Activated CD4-positive, alpha-beta memory T cell treated with anti-CD3 and anti-CD28 coated beads, Interleukin-2, amount 10 ng/mL, durations not matched to agents 7 days and 5 days (primary cell): ENCODE measurements at regions of chr2 and their contacts with region 1.

Region 1: GRCh38 chr2:225041851-225042799 is at the start of gene DOCK10:
- DNase-seq: peak; percentile 55
- H3K4me3 Mint-ChIP-seq: peak within 1 kb of the TSS; percentile 99
- H3K27ac Mint-ChIP-seq: peak within 1 kb of the TSS; percentile 98
- H3K4me1 Mint-ChIP-seq: peaks cover 49% of the 10 kb centered on the region
- H3K27me3 Mint-ChIP-seq: peaks cover 33% of the 10 kb centered on the region
- total RNA-seq, gene DOCK10: 223 to 239 TPM

Region 2: DNA sequence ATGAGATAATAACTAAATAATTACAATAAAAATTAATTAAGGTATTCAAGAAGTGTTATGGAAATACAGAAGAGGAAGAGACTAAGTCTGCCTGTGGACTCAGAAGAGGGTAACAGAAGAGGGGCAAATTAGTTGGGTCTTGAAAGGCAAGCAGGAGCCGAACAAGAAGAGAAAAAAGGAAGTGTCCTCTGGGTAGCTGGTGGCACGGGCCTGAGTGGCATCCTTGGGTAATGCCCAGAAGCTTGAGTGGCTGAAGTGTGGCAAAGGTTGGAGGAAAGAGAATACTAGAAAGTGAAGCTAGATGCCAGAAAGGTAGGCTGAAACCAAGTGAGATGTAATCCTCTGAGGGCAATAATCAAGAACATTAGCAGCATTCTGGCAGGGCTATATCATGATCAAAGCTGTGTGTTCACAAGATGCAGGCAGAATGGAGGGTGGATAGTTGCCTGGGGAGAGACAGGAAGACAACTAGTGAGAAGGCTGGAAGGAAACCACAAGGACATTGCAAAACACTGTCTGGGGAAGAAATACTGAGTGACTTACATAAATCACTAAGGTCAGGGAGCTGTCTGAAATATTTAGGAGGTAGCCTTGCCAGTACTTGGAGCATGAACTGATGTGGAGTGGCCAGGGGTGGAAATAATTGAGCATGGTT is 16.1 kb before region 1 on chr2:
- CTCF ChIA-PET with region 1: interaction called, 3 read pairs
- POLR2A ChIA-PET with region 1: interaction called, 10 read pairs
- DNase-seq: no peak
- H3K4me3 Mint-ChIP-seq: no peak overlapping the region
- H3K27ac Mint-ChIP-seq: peak overlapping the region; percentile 1
- H3K4me1 Mint-ChIP-seq: peaks cover 56% of the 10 kb centered on the region
- H3K27me3 Mint-ChIP-seq: no peaks in the 10 kb centered on the region

Region 3: DNA sequence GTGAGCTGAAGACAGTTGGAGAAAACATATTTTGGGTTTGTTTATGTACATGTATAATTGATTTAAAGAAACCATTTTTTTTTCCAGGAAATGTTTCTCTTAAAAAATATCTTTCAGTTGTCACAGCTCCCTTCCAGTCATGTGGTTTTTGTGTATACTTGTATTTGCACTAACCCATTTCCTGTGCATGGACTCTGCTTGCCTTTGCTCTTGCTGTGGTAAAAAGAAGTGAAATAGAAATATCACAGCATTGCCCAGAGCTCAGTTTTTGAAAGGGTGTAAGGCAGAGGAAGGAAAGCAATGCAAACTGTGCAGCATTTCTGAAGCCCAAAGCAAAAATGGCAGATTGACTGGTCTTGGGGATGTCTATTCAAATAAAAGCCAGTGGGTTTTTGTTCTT is 10.6 kb after region 1 on chr2:
- CTCF ChIA-PET with region 1: interaction called, 23 read pairs
- POLR2A ChIA-PET with region 1: interaction called, 113 read pairs
- DNase-seq: peak; percentile 50
- H3K4me3 Mint-ChIP-seq: peak overlapping the region; percentile 15
- H3K27ac Mint-ChIP-seq: peak overlapping the region; percentile 84
- H3K4me1 Mint-ChIP-seq: peaks cover 65% of the 10 kb centered on the region
- H3K27me3 Mint-ChIP-seq: peaks cover 15% of the 10 kb centered on the region

Region 4: DNA sequence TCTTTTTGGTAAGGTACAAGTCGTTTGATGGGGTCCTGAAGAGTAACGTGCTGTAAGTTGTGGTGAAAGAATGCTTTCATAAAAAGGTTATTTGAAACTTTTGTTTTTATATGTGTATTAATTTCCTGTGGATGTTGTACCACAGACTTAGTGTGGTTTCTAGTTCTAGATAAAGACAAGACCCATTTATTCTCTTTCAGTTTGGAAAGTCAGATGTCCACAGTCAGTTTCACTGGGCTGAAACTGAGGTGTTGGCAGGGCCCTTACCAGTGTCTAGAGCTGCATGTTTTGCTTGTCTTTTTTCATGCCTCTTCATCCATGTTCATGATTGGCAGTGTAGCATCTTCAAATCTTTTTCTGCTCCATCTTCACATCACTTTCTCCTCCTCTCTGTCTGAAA is 22.2 kb after region 1 on chr2:
- CTCF ChIA-PET with region 1: no interaction called
- POLR2A ChIA-PET with region 1: interaction called, 15 read pairs
- DNase-seq: no peak
- H3K4me3 Mint-ChIP-seq: no peak overlapping the region
- H3K27ac Mint-ChIP-seq: no peak overlapping the region
- H3K4me1 Mint-ChIP-seq: peaks cover 26% of the 10 kb centered on the region
- H3K27me3 Mint-ChIP-seq: no peaks in the 10 kb centered on the region

Region 5: DNA sequence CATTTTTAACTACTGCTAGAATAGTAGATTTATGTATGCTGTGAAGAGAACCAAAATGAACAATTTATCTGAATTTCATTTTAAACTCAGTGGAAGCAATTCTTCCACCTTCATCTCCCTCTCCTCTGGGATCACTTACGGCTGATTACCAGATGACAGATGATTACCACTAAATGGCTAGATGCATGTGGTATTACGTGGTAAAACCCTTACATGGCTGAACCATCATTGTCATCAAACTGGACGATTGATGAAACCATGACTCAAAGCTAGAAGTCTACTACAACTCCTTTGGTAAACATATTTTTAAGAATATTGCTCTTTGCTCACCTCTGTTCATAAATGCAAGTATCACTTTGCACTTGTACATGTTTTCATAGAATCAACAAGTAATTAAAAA is 48.6 kb after region 1 on chr2:
- CTCF ChIA-PET with region 1: no interaction called
- POLR2A ChIA-PET with region 1: no interaction called
- DNase-seq: no peak
- H3K4me3 Mint-ChIP-seq: no peak overlapping the region
- H3K27ac Mint-ChIP-seq: no peak overlapping the region
- H3K4me1 Mint-ChIP-seq: peaks cover 2% of the 10 kb centered on the region
- H3K27me3 Mint-ChIP-seq: peaks cover 4% of the 10 kb centered on the region